Right ventricle myocardium superior (tissue), 1 donor: ENCODE measurements at regions of chr16 and their contacts with region 1.

Region 1: GRCh38 chr16:70391881-70392481 is 45.3 kb downstream of the DDX19A start:
- DNase-seq: no peak
- ATAC-seq: peak; percentile 18

Region 2: GRCh38 chr16:70438969-70439862 is 47.2 kb after region 1 on chr16 and contains the start of gene ST3GAL2:
- intact Hi-C with region 1: loop called (anchors 5 kb)
- DNase-seq: peak; percentile 97
- ATAC-seq: peak; percentile 98
- total RNA-seq, gene ST3GAL2: 19.6 TPM

Region 3: DNA sequence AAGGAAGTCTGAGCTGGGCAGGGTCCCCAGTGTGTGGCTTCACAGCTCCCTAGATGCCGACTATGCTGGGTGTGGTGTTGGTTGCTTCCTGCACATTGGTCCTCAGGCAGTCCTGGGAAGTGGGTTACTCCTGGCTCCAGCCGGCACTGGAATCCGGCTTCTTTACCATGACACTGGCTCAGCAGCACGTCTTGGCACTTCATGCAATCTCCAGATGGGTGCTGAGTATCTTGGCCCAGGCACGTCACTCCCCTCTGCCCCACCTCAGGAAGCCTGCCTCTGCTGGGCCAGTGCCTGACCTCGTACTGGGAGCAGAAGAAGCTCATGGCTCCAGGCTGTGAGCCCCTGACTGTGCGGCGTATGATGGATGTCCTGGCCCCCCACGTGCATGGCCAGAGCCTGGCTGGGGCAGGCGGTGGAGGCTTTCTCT is 86.9 kb after region 1 on chr16:
- intact Hi-C with region 1: loop called (anchors 5 kb)
- DNase-seq: no peak
- ATAC-seq: peak; percentile 28

Region 4: DNA sequence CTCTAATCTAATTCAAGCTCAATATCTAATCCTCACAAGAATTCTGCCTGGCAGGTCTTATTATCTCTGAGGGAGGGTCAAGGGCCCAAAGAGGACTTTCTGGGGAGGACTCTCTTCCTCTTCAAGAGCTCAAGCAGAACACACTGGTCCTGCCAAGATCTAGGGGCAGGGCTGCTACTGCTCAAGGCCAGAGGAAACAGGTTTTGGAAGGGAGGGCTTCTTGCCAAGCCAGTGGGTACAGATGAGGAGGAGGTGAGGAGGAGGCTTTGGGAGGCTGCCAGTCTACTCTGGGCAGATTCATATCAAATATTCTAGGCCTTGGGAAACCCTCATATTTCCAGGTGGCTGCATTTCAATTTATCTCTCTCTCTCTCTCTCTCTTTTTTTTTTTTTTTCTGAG is 202.6 kb after region 1 on chr16:
- intact Hi-C with region 1: no loop called
- DNase-seq: peak; percentile 44
- ATAC-seq: no peak

Region 5: DNA sequence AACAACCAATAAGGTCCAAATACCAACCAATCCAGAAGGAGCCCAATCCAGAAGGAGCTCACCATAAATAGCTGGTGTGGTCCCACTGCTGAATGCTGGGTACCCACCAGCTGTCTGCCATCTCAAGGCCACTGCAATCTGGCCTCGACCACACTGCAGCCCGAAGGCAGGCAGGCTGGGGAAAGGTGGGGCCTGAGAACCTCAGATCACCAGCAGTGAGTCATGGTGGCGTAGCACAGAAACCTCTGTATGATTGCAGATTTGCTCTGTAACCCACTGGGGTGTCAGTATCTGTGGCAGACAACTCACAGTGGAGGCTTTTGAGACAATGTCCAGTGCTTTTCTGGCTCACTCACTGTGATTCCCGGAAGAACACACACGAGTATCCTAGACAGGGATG is 912.0 kb after region 1 on chr16:
- intact Hi-C with region 1: no loop called
- DNase-seq: no peak
- ATAC-seq: no peak